ENCODE measurements at regions of chr9 and their contacts with region 1.

Region 1: GRCh38 chr9:69971643-69972449 is 71.8 kb upstream of the MAMDC2 start:
- DNase-seq: peak; percentile 44
- H3K4me3 ChIP-seq: no peak overlapping the region
- H3K27me3 ChIP-seq: no peaks in the 10 kb centered on the region
- CTCF ChIP-seq: peak; percentile 94

Region 2: GRCh38 chr9:69925452-69925851 is 46.4 kb before region 1 on chr9:
- CTCF ChIA-PET with region 1: no interaction called
- POLR2A ChIA-PET with region 1: no interaction called
- DNase-seq: no peak
- H3K4me3 ChIP-seq: no peak overlapping the region
- H3K27me3 ChIP-seq: no peaks in the 10 kb centered on the region
- CTCF ChIP-seq: no peak

Region 3: DNA sequence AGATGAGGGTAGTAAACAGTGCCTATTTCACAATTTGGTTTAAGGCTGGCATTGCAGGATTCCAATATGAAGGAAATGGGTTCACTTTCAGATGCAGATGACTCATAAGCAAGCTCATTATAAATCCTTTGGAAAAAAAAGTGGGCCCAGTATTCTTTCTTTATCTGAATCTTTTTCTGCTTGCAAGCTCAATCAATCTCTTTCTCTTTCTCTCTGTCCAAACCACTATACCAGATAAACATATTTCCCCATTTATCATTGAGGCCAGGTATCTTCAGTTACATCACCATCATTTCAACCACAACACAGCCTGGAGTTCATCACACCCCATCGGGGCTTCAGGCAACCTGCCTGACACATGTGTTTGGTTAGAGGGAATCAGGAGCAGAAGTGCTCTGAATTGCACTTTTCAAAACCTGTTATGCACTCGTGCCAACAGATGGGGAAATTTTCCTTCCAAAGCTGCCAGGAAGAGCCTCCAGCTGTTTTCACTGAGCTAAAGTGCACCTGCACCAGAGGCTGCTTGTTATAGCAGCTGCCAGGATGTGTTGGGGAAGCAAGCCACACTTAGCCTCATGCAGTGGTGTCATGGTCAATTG is 41.9 kb after region 1 on chr9:
- CTCF ChIA-PET with region 1: interaction called, 5 read pairs
- POLR2A ChIA-PET with region 1: interaction called, 12 read pairs
- DNase-seq: peak; percentile 28
- H3K4me3 ChIP-seq: no peak overlapping the region
- H3K27me3 ChIP-seq: no peaks in the 10 kb centered on the region
- CTCF ChIP-seq: no peak

Region 4: GRCh38 chr9:70120834-70121510 is 149.1 kb after region 1 on chr9:
- CTCF ChIA-PET with region 1: interaction called, 130 read pairs
- POLR2A ChIA-PET with region 1: interaction called, 3 read pairs
- DNase-seq: peak; percentile 80
- H3K4me3 ChIP-seq: no peak overlapping the region
- H3K27me3 ChIP-seq: no peaks in the 10 kb centered on the region
- CTCF ChIP-seq: peak; percentile 53

Region 5: DNA sequence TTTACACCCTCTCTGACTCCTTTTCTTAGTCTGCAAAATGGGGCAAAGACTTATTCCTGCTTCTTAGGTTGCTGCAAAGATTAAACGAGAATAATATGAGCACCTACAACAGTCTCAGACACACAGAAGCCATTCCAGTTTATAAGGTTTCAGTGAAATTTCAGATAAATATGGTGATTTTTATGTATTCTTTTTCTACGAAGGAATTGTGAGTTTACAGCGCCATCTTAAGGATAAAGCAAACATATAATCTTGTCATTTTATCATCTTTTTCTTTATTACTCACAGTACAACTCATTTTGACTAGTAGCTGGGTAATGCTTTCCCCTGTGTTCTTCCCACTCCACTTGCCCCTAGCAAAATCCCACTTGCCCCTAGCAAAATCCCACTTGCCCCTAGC is 257.7 kb after region 1 on chr9:
- CTCF ChIA-PET with region 1: interaction called, 10 read pairs
- POLR2A ChIA-PET with region 1: no interaction called
- DNase-seq: no peak
- H3K4me3 ChIP-seq: no peak overlapping the region
- H3K27me3 ChIP-seq: no peaks in the 10 kb centered on the region
- CTCF ChIP-seq: peak; percentile 42